ENCODE measurements at regions of chr1 and their contacts with region 1.

Region 1: GRCh38 chr1:208615371-208615770 is 371.2 kb upstream of the PLXNA2 start:
- DNase-seq: no peak
- H3K4me3 ChIP-seq: no peak overlapping the region
- H3K27ac ChIP-seq: no peak overlapping the region
- H3K4me1 ChIP-seq: no peaks in the 10 kb centered on the region
- H3K27me3 ChIP-seq: no peaks in the 10 kb centered on the region
- CTCF ChIP-seq: no peak
- POLR2A ChIP-seq: no peak

Region 2: GRCh38 chr1:208272311-208272710 is 343.1 kb before region 1 on chr1:
- intact Hi-C with region 1: no loop called
- DNase-seq: no peak
- H3K4me3 ChIP-seq: no peak overlapping the region
- H3K27ac ChIP-seq: no peak overlapping the region
- H3K4me1 ChIP-seq: no peaks in the 10 kb centered on the region
- H3K27me3 ChIP-seq: no peaks in the 10 kb centered on the region
- CTCF ChIP-seq: no peak
- POLR2A ChIP-seq: no peak

Region 3: GRCh38 chr1:209134001-209134400 is 518.6 kb after region 1 on chr1:
- intact Hi-C with region 1: loop called (anchors 5 kb)
- DNase-seq: no peak
- H3K4me3 ChIP-seq: no peak overlapping the region
- H3K27ac ChIP-seq: no peak overlapping the region
- H3K4me1 ChIP-seq: no peaks in the 10 kb centered on the region
- H3K27me3 ChIP-seq: no peaks in the 10 kb centered on the region
- CTCF ChIP-seq: no peak
- POLR2A ChIP-seq: no peak